ENCODE measurements at regions of chr17 and their contacts with region 1.

Region 1: GRCh38 chr17:143782-144281 is 6.5 kb downstream of the SCGB1C2 start:
- DNase-seq: peak; percentile 51 to 70
- ATAC-seq: peak; percentile 74 to 75
- H3K4me3 ChIP-seq: peak overlapping the region in 2 of 4 donors; percentile 15 to 21
- H3K27ac ChIP-seq: peak overlapping the region in 2 of 4 donors; percentile 34 to 36
- H3K4me1 ChIP-seq: no peaks in the 10 kb centered on the region
- H3K27me3 ChIP-seq: no peaks in the 10 kb centered on the region
- CTCF ChIP-seq: peak; percentile 81 to 97 (median 89)
- POLR2A ChIP-seq: no peak

Region 2: DNA sequence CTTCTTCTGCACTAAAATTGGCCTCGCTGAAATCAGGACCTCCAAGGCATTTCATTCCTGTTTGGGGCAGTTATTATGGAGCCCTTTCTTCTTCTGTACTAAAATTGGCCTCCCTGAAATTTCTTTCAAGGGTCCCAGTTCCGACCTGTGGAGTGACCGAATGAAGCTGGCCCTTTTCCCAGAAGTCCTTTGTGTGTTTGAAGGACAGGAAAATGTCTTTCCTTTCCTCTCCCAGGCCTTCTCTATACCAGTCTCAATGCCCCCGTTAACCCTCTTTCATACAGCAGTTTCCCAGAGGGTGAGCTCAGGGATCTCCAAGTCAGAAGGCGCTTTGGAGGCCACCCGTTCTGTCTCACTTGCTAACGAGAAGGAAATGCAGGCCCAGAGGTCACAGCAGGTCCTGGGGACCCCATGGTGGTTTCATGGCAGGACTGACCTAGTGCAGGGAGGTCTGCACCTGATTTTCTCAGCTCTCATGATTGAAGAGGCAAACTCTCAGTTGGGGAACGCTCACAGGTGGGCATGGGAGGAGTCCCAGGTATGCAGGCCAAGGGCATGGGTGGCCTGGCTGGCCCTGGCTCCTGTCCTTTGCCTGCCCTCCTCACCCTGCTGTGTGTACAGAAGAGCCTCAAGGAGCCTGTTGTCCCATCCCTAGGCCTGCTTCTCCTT is 74.7 kb after region 1 on chr17:
- in situ Hi-C with region 1: no loop called
- intact Hi-C with region 1: no loop called
- DNase-seq: no peak
- ATAC-seq: no peak
- H3K4me3 ChIP-seq: no peak overlapping the region
- H3K27ac ChIP-seq: no peak overlapping the region
- H3K4me1 ChIP-seq: no peaks in the 10 kb centered on the region
- H3K27me3 ChIP-seq: no peaks in the 10 kb centered on the region
- CTCF ChIP-seq: no peak
- POLR2A ChIP-seq: no peak

Region 3: DNA sequence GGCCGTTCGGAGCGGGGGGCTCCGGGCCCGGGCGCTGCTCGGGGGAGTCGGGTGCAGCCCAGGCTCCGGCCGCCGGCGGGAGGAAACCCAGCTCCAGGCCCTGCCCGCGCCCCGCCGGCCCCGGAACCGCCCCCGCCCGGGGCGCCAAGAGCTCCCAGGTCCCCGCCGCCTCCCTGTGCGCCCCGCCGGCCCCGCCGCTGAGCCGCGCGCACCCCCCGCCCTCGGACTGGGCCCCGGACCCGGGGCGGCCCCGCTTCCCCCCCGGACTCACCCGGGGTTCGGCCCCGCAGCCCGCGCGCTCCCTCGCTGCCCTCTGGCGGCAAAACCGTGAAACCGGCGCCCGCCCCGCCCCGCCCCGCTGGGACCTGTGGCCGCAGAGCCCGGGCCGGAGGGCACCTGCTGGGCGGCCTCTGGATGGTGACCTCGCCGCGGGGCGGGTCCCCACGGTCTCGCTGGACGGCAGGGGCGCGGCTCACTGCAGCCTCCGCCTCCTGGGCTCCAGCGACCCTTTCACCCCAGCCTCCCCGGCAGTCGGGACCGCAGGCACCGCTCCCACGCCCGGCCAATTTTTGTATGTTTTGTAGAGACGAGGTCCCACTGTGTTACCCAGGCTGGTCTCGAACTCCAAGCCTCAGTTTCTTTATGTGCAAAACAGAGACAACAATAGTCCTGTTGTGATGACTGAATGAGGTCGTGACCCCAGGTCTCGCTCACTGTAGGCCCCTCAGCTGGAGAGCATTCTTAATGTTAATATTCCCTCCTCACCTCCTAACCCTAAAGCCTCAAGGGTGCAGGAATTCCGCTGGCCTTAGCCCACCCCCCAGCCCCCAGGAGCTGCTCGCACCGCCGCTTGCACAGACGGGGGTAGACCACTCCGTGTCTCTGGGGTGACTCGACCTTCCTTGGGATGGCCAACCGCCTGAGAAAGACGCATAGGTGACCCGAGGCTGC is 242.4 kb after region 1 on chr17:
- in situ Hi-C with region 1: no loop called
- intact Hi-C with region 1: loop called (anchors 5 kb)
- DNase-seq: peak in 1 of 2 donors; percentile 49
- ATAC-seq: peak; percentile 71 to 74
- H3K4me3 ChIP-seq: peak overlapping the region; percentile 47 to 54 (median 52)
- H3K27ac ChIP-seq: peak overlapping the region in 3 of 4 donors; percentile 75 to 78 (median 78)
- H3K4me1 ChIP-seq: no peaks in the 10 kb centered on the region
- H3K27me3 ChIP-seq: peaks cover 0 to 10% (median 3%) of the 10 kb centered on the region in 3 donors
- CTCF ChIP-seq: peak; percentile 29 to 82 (median 77)
- POLR2A ChIP-seq: peak in 1 of 2 donors; percentile 21

Region 4: GRCh38 chr17:409848-410545 is 266.2 kb after region 1 on chr17:
- in situ Hi-C with region 1: no loop called
- intact Hi-C with region 1: loop called (anchors 5 kb)
- DNase-seq: peak; percentile 99
- ATAC-seq: peak; percentile 97 to 98
- H3K4me3 ChIP-seq: peak overlapping the region; percentile 70 to 94 (median 82)
- H3K27ac ChIP-seq: peak overlapping the region; percentile 70 to 80 (median 72)
- H3K4me1 ChIP-seq: peaks cover 13 to 14% of the 10 kb centered on the region in 2 donors
- H3K27me3 ChIP-seq: no peaks in the 10 kb centered on the region
- CTCF ChIP-seq: no peak
- POLR2A ChIP-seq: peak in 1 of 2 donors; percentile 49

Region 5: GRCh38 chr17:752002-752619 is 608.3 kb after region 1 on chr17 and contains the start of gene GEMIN4:
- in situ Hi-C with region 1: no loop called
- intact Hi-C with region 1: loop called (anchors 5 kb)
- DNase-seq: peak; percentile 81 to 86
- ATAC-seq: peak; percentile 95 to 97
- H3K4me3 ChIP-seq: peak within 1 kb of the TSS; percentile 90 to 99 (median 91)
- H3K27ac ChIP-seq: peak within 1 kb of the TSS; percentile 74 to 87 (median 85)
- H3K4me1 ChIP-seq: peaks cover 12 to 19% of the 10 kb centered on the region in 2 donors
- H3K27me3 ChIP-seq: no peaks in the 10 kb centered on the region
- CTCF ChIP-seq: peak; percentile 88 to 97 (median 94)
- POLR2A ChIP-seq: peak; percentile 70 to 73
- total RNA-seq, gene GEMIN4: 10.6 to 21.6 (median 18.9) TPM

Region 6: GRCh38 chr17:1055751-1056645 is 912.2 kb after region 1 on chr17:
- in situ Hi-C with region 1: no loop called
- intact Hi-C with region 1: loop called (anchors 2 kb)
- DNase-seq: peak; percentile 32 to 59
- ATAC-seq: peak; percentile 81 to 90
- H3K4me3 ChIP-seq: no peak overlapping the region
- H3K27ac ChIP-seq: peak overlapping the region in 3 of 4 donors; percentile 27 to 58 (median 37)
- H3K4me1 ChIP-seq: peaks cover 5 to 6% of the 10 kb centered on the region in 2 donors
- H3K27me3 ChIP-seq: no peaks in the 10 kb centered on the region
- CTCF ChIP-seq: peak; percentile 59 to 86 (median 83)
- POLR2A ChIP-seq: no peak

Measured in gastrocnemius medialis (tissue), 4 donors.